Transverse colon (tissue), 4 donors: ENCODE measurements at regions of chr13 and their contacts with region 1.

Region 1: GRCh38 chr13:86446311-86446710 is 647.1 kb upstream of the SLITRK6 start:
- DNase-seq: no peak
- H3K4me3 ChIP-seq: no peak overlapping the region
- H3K27ac ChIP-seq: no peak overlapping the region
- H3K4me1 ChIP-seq: no peaks in the 10 kb centered on the region
- H3K27me3 ChIP-seq: no peaks in the 10 kb centered on the region
- CTCF ChIP-seq: no peak
- EP300 ChIP-seq: no peak
- POLR2A ChIP-seq: no peak

Region 2: GRCh38 chr13:85347251-85347650 is 1099.1 kb before region 1 on chr13:
- in situ Hi-C with region 1: no loop called
- intact Hi-C with region 1: loop called (anchors 5 kb)
- DNase-seq: no peak
- H3K4me3 ChIP-seq: no peak overlapping the region
- H3K27ac ChIP-seq: no peak overlapping the region
- H3K4me1 ChIP-seq: no peaks in the 10 kb centered on the region
- H3K27me3 ChIP-seq: no peaks in the 10 kb centered on the region
- CTCF ChIP-seq: no peak
- EP300 ChIP-seq: no peak
- POLR2A ChIP-seq: no peak

Region 3: DNA sequence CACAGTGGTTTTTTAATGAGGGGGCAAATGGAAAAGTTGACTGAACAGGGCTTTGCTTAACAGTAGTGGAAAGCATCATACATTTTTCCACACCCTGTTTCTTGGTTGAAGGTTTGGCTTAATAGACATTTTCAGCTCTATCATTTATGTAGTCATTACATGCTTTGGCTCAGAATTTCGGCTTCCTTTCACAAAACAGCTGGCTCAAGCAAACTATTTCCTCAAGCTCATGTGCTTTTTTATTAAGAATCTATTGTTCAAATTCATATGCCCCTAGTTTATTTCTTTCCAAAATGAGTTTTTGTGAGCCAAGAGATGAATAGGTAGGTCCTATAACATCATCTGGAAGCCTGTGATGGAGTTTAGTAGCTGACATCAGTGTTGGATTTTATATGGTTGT is 760.9 kb before region 1 on chr13:
- in situ Hi-C with region 1: no loop called
- intact Hi-C with region 1: loop called (anchors 5 kb)
- DNase-seq: no peak
- H3K4me3 ChIP-seq: no peak overlapping the region
- H3K27ac ChIP-seq: no peak overlapping the region
- H3K4me1 ChIP-seq: no peaks in the 10 kb centered on the region
- H3K27me3 ChIP-seq: no peaks in the 10 kb centered on the region
- CTCF ChIP-seq: no peak
- EP300 ChIP-seq: no peak
- POLR2A ChIP-seq: no peak

Region 4: DNA sequence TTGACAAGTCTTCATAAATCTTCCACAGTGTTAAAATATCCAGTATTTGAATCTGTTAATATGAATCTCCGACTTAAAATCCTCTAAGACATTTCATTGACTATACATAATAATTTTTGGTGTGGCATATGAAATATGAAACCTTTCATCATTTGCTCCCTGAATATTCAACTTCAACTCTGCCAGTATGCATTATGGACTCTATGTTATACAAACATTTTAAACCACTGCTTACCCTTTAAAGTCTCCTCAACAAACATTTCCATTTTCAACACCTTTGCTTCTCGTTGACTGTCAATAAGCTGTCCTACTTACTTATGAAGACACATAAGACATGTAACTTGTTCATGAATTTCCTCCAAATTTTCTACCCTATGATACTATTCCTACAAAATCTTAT is 67.7 kb before region 1 on chr13:
- in situ Hi-C with region 1: no loop called
- intact Hi-C with region 1: no loop called
- DNase-seq: no peak
- H3K4me3 ChIP-seq: no peak overlapping the region
- H3K27ac ChIP-seq: no peak overlapping the region
- H3K4me1 ChIP-seq: no peaks in the 10 kb centered on the region
- H3K27me3 ChIP-seq: no peaks in the 10 kb centered on the region
- CTCF ChIP-seq: no peak
- EP300 ChIP-seq: no peak
- POLR2A ChIP-seq: no peak

Region 5: GRCh38 chr13:86476656-86477055 is 30.3 kb after region 1 on chr13:
- in situ Hi-C with region 1: no loop called
- intact Hi-C with region 1: loop called (anchors 1 kb)
- DNase-seq: no peak
- H3K4me3 ChIP-seq: no peak overlapping the region
- H3K27ac ChIP-seq: no peak overlapping the region
- H3K4me1 ChIP-seq: no peaks in the 10 kb centered on the region
- H3K27me3 ChIP-seq: no peaks in the 10 kb centered on the region
- CTCF ChIP-seq: no peak
- EP300 ChIP-seq: no peak
- POLR2A ChIP-seq: no peak